ENCODE measurements at regions of chr11 and their contacts with region 1.

Region 1: GRCh38 chr11:119323538-119324033 is 6.7 kb upstream of the MCAM start:
- DNase-seq: no peak
- H3K4me3 ChIP-seq: no peak overlapping the region
- CTCF ChIP-seq: peak; percentile 65

Region 2: GRCh38 chr11:119196833-119197483 is 126.6 kb before region 1 on chr11:
- CTCF ChIA-PET with region 1: interaction called, 39 read pairs
- POLR2A ChIA-PET with region 1: no interaction called
- DNase-seq: peak; percentile 52
- H3K4me3 ChIP-seq: no peak overlapping the region
- CTCF ChIP-seq: peak; percentile 69

Region 3: DNA sequence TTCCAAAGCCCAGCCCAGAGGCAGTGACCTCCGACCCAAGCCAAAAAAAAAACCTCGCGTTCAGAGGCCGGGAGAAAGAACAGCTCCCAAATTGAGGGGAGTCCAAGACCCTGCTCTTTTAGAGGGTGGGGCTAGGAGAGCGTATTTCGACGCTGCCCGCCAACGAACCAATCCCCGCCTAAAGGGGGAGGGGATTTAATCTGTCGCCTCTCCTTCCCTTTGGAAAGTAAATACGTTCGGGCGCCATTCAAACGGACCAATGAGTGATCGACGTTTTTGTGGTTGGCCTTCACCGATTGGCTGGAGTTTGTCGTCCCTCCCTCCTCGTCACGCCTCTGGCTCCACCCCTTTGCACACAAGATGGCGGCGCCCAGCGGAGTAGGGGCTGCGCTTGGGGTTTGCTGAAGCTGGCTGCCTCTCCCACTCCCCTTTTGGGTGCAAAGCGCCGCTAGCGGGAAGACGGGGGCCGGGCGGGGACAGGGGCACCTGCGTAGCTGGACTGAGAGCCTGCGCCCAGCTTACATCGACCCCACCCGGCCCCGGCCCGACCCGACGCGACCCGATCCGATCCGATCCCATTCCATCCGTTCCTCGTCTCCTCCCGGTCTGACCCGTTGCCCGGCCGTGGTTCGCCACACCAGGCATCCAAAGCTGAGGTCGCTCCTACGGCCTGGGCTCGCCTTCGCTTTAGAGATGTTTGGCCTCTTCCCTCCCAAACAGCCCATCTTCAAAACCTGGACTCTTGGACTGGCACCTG is 10.8 kb after region 1 on chr11 and contains the start of gene RNF26:
- CTCF ChIA-PET with region 1: interaction called, 342 read pairs
- POLR2A ChIA-PET with region 1: interaction called, 4 read pairs
- DNase-seq: peak; percentile 88
- H3K4me3 ChIP-seq: peak within 1 kb of the TSS; percentile 97
- CTCF ChIP-seq: no peak

Region 4: DNA sequence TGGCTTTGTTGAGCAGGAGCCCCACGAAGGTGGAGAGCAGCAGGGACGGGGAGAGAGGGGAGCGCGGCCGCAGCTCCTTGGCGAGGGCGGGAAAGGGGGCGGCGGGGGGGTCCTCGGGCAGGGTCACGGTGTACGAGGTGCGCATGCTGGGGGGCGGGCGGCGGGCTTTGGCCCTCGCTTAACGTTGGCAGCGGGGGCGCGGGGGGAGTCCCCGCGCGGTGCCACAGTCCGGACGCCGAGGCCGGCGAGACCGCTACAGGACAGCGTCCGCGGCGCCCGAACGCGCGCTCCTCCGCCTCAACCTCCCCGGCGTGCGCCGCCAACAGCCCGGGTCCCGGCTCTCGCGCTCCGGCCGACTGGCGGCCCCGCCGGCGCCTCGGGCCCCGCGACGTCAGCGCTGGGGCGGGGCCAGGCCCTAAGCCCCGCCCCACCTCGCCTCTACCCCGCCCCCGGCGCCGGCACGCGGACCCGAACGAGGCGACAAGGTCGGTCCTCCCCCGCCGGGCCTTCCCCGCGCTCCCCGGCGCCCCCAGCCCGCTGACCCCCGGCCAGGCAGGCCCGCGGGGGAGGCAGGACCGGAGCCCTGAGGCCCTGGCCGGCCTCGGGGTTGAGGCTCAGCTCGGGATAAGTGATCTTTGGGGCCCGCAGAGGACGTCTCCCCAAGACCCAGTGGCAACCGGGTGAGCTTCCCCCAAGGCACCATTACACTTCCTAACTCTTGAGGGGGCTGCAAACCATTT is 40.4 kb after region 1 on chr11:
- CTCF ChIA-PET with region 1: interaction called, 31 read pairs
- POLR2A ChIA-PET with region 1: no interaction called
- DNase-seq: no peak
- H3K4me3 ChIP-seq: peak overlapping the region; percentile 50
- CTCF ChIP-seq: no peak

Region 5: DNA sequence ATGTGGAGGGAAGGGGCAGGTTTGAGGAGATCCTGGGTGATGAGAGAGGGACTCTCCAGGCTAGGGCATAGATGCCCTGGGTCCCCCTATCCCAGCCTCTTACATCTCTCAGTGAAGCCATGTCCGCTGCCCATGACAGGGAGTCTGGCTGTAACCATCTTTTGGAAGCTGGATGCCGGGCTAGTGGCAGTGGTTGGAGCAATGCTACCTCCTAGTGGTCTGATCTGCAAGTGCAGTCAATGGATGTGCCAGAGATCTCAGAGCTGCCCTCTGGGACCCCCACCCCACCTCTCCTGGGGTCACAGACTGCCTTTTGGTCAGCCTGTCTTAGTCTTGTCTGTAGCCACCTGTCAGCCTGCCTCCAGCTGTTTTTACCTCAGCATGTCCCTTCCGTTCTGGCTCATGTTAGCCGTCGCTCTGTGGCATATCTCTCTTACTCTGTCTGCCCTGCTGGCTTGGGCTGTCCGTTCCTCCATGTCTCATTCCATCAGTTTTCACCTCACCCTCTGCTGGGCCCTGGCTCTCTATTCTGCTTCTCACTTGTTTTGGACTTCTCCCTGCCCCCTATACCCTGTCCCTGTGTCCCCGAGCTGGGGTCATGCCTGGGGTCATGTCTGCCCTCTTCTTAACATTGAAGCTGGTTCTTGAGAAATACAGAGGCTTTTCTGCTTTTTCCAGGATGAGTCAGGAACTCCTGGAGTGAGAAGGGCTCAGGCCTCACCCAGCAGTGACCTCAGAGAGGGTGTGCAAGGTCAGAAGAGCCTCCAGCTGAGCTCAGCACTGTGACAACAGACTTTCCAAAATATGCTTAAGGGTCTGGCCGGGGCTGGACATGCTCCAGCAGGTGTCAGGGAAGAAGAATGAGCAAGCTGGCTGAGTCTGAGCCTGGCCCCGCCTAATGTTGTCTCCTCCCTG is 151.4 kb after region 1 on chr11:
- CTCF ChIA-PET with region 1: interaction called, 37 read pairs
- POLR2A ChIA-PET with region 1: no interaction called
- DNase-seq: no peak
- H3K4me3 ChIP-seq: no peak overlapping the region
- CTCF ChIP-seq: peak; percentile 93